ENCODE measurements at regions of chr3 and their contacts with region 1.

Region 1: GRCh38 chr3:45607790-45608189 is 13.2 kb downstream of the LIMD1 start:
- DNase-seq: no peak
- H3K4me3 ChIP-seq: no peak overlapping the region
- H3K4me3 Mint-ChIP-seq: no peak overlapping the region
- H3K27ac ChIP-seq: peak overlapping the region; percentile 29 to 72
- H3K27ac Mint-ChIP-seq: peak overlapping the region; percentile 84 to 94 (median 91)
- H3K4me1 ChIP-seq: peaks cover 14 to 34% of the 10 kb centered on the region in 2 donors
- H3K4me1 Mint-ChIP-seq: peaks cover 42% of the 10 kb centered on the region
- H3K27me3 ChIP-seq: no peaks in the 10 kb centered on the region
- H3K27me3 Mint-ChIP-seq: no peaks in the 10 kb centered on the region
- CTCF ChIP-seq: no peak

Region 2: GRCh38 chr3:45642731-45643152 is 35.0 kb after region 1 on chr3:
- intact Hi-C with region 1: no loop called
- DNase-seq: no peak
- H3K4me3 ChIP-seq: no peak overlapping the region
- H3K4me3 Mint-ChIP-seq: no peak overlapping the region
- H3K27ac ChIP-seq: peak overlapping the region in 1 of 2 donors; percentile 54
- H3K27ac Mint-ChIP-seq: peak overlapping the region; percentile 20 to 85 (median 65)
- H3K4me1 ChIP-seq: peaks cover 66 to 80% of the 10 kb centered on the region in 2 donors
- H3K4me1 Mint-ChIP-seq: peaks cover 72% of the 10 kb centered on the region
- H3K27me3 ChIP-seq: no peaks in the 10 kb centered on the region
- H3K27me3 Mint-ChIP-seq: peaks cover 0 to 5% (median 0%) of the 10 kb centered on the region in 3 donors
- CTCF ChIP-seq: no peak

Region 3: GRCh38 chr3:45656575-45657363 is 49.0 kb after region 1 on chr3:
- intact Hi-C with region 1: loop called in 1 of 2 experiments (anchors 2 kb)
- DNase-seq: peak; percentile 95 to 97 (median 96)
- H3K4me3 ChIP-seq: no peak overlapping the region
- H3K4me3 Mint-ChIP-seq: peak overlapping the region; percentile 53 to 60
- H3K27ac ChIP-seq: peak overlapping the region; percentile 42 to 65
- H3K27ac Mint-ChIP-seq: peak overlapping the region; percentile 92 to 98 (median 97)
- H3K4me1 ChIP-seq: peaks cover 36 to 40% of the 10 kb centered on the region in 2 donors
- H3K4me1 Mint-ChIP-seq: peaks cover 46% of the 10 kb centered on the region
- H3K27me3 ChIP-seq: no peaks in the 10 kb centered on the region
- H3K27me3 Mint-ChIP-seq: no peaks in the 10 kb centered on the region
- CTCF ChIP-seq: peak; percentile 85

Region 4: GRCh38 chr3:45896956-45897355 is 289.2 kb after region 1 on chr3:
- intact Hi-C with region 1: no loop called
- DNase-seq: no peak
- H3K4me3 ChIP-seq: no peak overlapping the region
- H3K4me3 Mint-ChIP-seq: no peak overlapping the region
- H3K27ac ChIP-seq: no peak overlapping the region
- H3K27ac Mint-ChIP-seq: no peak overlapping the region
- H3K4me1 ChIP-seq: no peaks in the 10 kb centered on the region
- H3K4me1 Mint-ChIP-seq: peaks cover 16% of the 10 kb centered on the region
- H3K27me3 ChIP-seq: no peaks in the 10 kb centered on the region
- H3K27me3 Mint-ChIP-seq: peaks cover 0 to 6% (median 2%) of the 10 kb centered on the region in 3 donors
- CTCF ChIP-seq: no peak

Measured in CD14-positive monocyte (primary cell).